ENCODE measurements at regions of chr3 and their contacts with region 1.

Region 1: GRCh38 chr3:34260271-34261006 is 462.0 kb downstream of the PDCD6IP start:
- DNase-seq: peak; percentile 42
- H3K4me3 Mint-ChIP-seq: no peak overlapping the region
- H3K27ac Mint-ChIP-seq: no peak overlapping the region
- H3K4me1 Mint-ChIP-seq: no peaks in the 10 kb centered on the region
- H3K27me3 Mint-ChIP-seq: peaks cover 15% of the 10 kb centered on the region

Region 2: DNA sequence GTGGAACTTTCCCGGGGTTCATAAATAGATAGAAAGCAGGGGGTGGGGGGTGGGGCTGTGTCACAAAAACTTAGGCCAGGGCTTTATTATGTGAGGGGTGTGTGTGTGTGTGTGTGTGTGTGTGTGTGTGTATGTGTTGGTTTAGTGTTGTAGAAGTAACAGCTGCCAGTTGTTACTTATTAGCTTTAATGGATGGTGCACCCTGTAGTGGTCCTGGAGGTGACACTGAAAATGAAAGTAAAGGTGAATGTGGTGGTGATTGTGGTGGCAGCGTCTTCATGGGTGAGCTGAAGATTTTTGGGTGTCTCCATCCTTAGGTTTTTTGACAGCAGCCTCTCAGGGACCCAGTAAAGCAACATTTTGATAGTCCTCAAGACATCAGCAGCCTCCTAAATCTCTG is 12.1 kb before region 1 on chr3:
- CTCF ChIA-PET with region 1: interaction called, 14 read pairs
- DNase-seq: no peak
- H3K4me3 Mint-ChIP-seq: no peak overlapping the region
- H3K27ac Mint-ChIP-seq: no peak overlapping the region
- H3K4me1 Mint-ChIP-seq: no peaks in the 10 kb centered on the region
- H3K27me3 Mint-ChIP-seq: no peaks in the 10 kb centered on the region

Region 3: DNA sequence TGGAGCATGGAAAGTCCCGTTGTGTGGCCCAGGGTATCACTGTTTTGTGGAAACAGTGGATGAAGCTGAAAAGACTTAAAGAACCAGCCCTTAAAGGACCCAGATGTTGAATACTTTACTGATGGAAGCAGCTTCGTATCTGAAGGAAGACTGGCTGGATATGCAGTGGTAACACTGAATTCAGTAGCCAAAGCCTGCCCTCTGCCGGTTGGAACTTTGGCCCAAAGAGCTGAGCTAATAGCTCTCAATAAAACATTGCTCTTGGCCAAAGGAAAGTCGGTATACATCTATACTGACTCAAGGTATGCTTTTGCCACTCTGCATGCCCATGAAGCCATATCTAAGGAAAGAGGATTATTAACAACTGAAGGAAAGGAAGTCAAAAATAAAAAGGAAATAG is 423.4 kb after region 1 on chr3:
- CTCF ChIA-PET with region 1: interaction called, 11 read pairs
- DNase-seq: peak; percentile 44
- H3K4me3 Mint-ChIP-seq: no peak overlapping the region
- H3K27ac Mint-ChIP-seq: no peak overlapping the region
- H3K4me1 Mint-ChIP-seq: no peaks in the 10 kb centered on the region
- H3K27me3 Mint-ChIP-seq: no peaks in the 10 kb centered on the region

Measured in activated naive CD4-positive, alpha-beta T cell treated with anti-CD3 and anti-CD28 coated beads, Interleukin-2, amount 10 ng/mL, durations not matched to agents 7 days and 5 days (primary cell).